ENCODE measurements at regions of chr16 and their contacts with region 1.

Region 1: DNA sequence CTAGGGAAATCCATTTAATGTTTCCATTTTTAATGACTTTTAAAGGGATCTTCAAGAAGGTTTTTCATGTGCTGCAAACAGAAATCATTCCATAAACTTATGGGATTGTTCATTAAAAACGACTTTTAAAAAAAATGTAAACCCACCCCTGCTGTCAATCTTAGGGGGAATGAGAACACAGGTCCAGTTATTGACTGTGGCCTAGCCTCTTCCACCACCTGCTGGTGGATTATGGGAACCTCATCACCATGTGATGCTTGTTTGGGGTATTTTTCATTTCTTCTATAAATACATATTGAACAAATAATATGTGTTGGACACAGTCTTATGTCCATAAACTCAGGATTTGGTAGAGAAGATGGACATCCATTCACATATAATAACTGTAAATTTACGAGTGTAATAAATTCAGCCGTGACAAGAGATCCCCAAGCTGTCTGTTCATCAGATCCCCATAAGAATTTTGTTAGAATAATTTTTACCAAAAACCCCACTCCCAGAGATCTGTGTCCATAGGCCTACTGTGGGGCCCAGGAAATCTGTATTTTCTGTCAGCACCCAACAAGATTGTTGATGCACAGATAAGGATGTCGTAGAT is 42.0 kb upstream of the TMC5 start:
- DNase-seq: peak; percentile 42
- H3K4me3 ChIP-seq: no peak overlapping the region
- H3K27ac ChIP-seq: no peak overlapping the region
- H3K4me1 ChIP-seq: no peaks in the 10 kb centered on the region
- H3K27me3 ChIP-seq: no peaks in the 10 kb centered on the region
- CTCF ChIP-seq: peak; percentile 74

Region 2: DNA sequence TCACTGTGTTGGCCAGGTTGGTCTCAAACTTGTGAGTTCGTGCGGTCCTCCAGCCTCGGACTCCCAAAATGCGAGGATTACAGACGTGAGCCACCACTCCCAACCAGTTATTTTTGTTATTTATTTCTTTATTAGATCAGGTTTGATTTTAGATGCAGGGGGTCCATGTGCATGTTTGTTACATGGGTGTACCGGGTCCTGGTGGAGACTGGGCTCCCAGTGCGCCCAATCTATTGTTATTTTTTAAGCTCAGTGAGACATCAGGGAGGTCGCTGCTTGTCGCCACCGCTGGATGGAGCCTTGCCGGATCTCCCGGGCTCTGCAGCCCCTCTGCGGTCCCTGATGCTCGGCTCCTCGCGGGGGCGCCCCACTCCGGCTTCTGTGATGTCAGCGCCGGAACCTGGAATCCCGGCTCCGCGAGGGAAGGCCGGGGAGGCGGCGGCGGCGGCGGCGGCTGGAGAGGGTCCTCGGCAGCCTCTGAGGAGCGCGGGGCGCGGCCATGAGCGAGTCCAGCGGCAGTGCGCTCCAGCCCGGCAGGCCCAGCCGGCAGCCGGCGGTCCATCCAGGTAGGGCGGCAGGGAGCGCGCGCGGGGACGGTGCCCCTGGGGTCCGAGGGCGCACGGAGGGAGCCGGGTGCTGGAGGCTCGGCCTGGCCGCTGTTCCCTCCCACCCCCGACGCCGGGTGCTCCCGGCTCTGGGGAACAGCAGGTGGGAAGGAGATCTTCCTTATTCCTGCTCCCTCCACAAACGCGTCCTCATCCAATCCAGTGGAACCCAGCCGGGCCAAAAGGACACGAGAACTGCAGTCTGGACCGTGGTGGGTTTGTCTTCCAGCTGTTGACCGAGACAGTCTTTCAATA is 391.9 kb before region 1 on chr16 and contains the start of gene TMC7:
- intact Hi-C with region 1: loop called (anchors 10 kb)
- DNase-seq: peak; percentile 92
- H3K4me3 ChIP-seq: peak within 1 kb of the TSS; percentile 76
- H3K27ac ChIP-seq: peak within 1 kb of the TSS; percentile 72
- H3K4me1 ChIP-seq: no peaks in the 10 kb centered on the region
- H3K27me3 ChIP-seq: peaks cover 3% of the 10 kb centered on the region
- CTCF ChIP-seq: peak; percentile 55
- total RNA-seq, gene TMC7: 10.0 to 10.6 TPM

Region 3: GRCh38 chr16:19086322-19087199 is 289.1 kb before region 1 on chr16:
- intact Hi-C with region 1: loop called (anchors 5 kb)
- DNase-seq: peak; percentile 91
- H3K4me3 ChIP-seq: peak overlapping the region; percentile 37
- H3K27ac ChIP-seq: peak overlapping the region; percentile 13
- H3K4me1 ChIP-seq: no peaks in the 10 kb centered on the region
- H3K27me3 ChIP-seq: no peaks in the 10 kb centered on the region
- CTCF ChIP-seq: peak; percentile 98

Region 4: DNA sequence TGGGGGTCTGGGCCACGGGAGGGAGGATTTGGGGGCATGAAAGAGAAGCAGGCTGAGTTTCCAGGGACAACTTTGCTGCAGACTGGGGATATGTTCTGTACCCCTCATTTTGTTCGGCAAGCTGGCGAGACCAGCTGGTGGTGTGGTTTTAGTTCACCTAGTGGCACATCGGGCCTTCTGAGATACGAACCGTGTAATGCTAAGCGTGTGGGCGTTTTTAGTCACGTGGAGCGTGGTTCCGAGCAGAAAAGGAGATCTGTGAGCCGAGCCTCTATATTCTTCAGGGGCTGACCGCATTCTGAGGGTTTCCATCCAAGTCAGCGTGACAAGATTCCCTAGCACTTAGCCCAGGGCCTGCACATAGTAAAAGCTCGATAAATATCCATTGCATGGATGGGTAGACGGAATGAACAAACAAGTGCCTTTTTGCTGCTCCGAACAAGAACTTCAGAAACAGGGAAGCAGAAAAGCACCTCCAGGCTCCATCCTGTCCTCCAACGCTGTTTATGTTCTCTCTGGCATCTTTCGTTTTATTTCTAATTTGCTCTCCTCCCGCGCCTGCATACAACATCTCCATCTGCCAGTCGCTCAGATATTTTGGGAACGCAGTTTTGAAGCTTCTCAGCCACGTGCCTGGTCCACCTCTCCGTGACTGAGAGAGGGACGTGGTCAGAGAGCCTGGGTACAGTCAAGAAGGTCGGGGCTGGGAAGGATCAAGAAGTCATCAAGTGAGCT is 201.8 kb before region 1 on chr16:
- intact Hi-C with region 1: loop called (anchors 5 kb)
- DNase-seq: no peak
- H3K4me3 ChIP-seq: no peak overlapping the region
- H3K27ac ChIP-seq: no peak overlapping the region
- H3K4me1 ChIP-seq: no peaks in the 10 kb centered on the region
- H3K27me3 ChIP-seq: no peaks in the 10 kb centered on the region
- CTCF ChIP-seq: no peak